ENCODE measurements at regions of chr19 and their contacts with region 1.

Region 1: DNA sequence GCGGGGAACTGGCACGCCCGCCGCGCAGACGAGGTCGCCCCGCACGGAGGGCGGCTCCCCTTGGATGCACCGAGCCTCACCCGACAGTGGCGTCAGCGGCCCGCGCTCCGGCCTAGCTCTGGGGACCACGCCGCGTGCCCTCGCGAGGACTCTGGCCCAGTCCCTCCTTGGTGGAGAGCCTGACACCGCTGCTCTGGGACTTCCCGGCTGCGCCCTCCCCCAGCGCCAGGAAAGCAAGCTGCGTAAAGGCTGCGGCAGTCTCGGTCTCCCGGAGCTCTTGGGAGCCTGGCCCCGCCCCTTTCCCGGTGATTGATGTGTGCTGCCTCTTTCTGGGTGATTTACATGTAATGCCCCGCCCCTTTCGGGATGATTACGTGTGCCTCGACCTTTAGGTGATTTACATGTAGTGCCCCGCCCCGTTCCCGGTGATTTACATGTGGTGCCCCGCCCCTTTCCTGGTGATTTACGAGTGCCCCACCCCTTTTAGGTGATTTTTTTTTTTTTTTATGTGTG is at the start of gene LENG9:
- DNase-seq: peak; percentile 98
- ATAC-seq: peak; percentile 79 to 84 (median 81)
- H3K4me3 ChIP-seq: peak within 1 kb of the TSS; percentile 78
- H3K27ac ChIP-seq: peak within 1 kb of the TSS; percentile 91
- H3K4me1 ChIP-seq: peaks cover 9% of the 10 kb centered on the region
- H3K27me3 ChIP-seq: peaks cover 0 to 2% (median 0%) of the 10 kb centered on the region in 3 donors
- CTCF ChIP-seq: no peak
- total RNA-seq, gene LENG9: 2.0 to 3.7 (median 2.7) TPM

Region 2: GRCh38 chr19:53982611-53983010 is 481.0 kb before region 1 on chr19:
- intact Hi-C with region 1: loop called in 1 of 2 experiments (anchors 10 kb)
- DNase-seq: peak; percentile 53 to 85
- ATAC-seq: peak in 3 of 4 donors; percentile 25 to 47 (median 35)
- H3K4me3 ChIP-seq: peak overlapping the region; percentile 48
- H3K27ac ChIP-seq: no peak overlapping the region
- H3K4me1 ChIP-seq: peaks cover 8% of the 10 kb centered on the region
- H3K27me3 ChIP-seq: peaks cover 0 to 12% (median 5%) of the 10 kb centered on the region in 3 donors
- CTCF ChIP-seq: no peak

Region 3: GRCh38 chr19:54376610-54377285 is 86.8 kb before region 1 on chr19:
- intact Hi-C with region 1: no loop called
- DNase-seq: no peak
- ATAC-seq: no peak
- H3K4me3 ChIP-seq: no peak overlapping the region
- H3K27ac ChIP-seq: no peak overlapping the region
- H3K4me1 ChIP-seq: no peaks in the 10 kb centered on the region
- H3K27me3 ChIP-seq: no peaks in the 10 kb centered on the region
- CTCF ChIP-seq: no peak

Region 4: GRCh38 chr19:54391589-54392061 is 72.0 kb before region 1 on chr19:
- intact Hi-C with region 1: no loop called
- DNase-seq: no peak
- ATAC-seq: no peak
- H3K4me3 ChIP-seq: no peak overlapping the region
- H3K27ac ChIP-seq: no peak overlapping the region
- H3K4me1 ChIP-seq: no peaks in the 10 kb centered on the region
- H3K27me3 ChIP-seq: peaks cover 0 to 21% (median 5%) of the 10 kb centered on the region in 3 donors
- CTCF ChIP-seq: no peak

Region 5: DNA sequence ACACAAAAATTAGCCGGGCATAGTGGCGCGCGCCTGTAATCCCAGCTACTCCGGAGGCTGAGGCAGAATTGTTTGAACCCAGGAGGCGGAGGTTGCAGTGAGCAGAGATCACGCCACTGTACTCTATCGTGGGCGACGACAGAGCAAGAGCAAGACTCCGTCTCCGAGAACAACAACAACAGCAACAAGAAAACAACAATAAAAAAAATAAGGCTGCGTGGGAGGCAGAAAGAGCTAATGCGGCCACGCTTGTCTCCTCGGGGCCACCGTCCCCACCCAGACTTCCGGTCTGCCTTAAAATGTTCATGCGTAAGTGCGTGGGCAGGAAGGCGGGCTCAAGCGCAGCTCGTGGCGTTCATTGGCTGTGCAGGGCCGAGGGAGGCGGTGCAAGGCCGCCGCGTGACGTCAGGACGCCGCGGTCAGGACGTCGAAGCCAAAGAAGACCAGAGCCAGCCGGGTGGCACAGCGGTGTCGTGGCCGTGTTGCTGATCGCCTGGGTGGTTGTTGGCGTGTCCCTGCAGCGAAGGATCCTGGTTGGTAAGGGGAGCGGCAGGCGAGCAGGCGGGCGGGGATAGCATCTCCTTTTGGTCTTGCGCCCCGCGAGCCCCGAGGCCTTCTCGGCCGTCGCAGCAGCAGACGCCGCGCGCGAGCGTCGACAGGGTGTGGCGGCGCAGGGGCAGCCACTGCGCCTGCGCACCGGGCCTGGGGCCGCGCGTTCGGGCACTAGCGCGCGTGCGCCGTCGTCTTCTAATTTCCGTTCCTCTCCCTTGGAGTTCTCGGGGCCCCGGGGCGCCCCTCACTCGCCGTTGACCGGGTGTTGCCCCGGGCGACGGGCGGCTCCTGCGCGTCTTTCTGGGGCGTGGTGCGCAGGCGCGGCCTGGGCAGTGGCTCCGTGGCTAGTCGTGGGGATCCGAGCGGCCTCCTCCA is 14.6 kb before region 1 on chr19 and contains the start of gene LENG8:
- intact Hi-C with region 1: loop called in 1 of 2 experiments (anchors 1 kb)
- DNase-seq: peak; percentile 98 to 99
- ATAC-seq: peak; percentile 97 to 98 (median 98)
- H3K4me3 ChIP-seq: peak within 1 kb of the TSS; percentile 80
- H3K27ac ChIP-seq: peak within 1 kb of the TSS; percentile 94
- H3K4me1 ChIP-seq: peaks cover 25% of the 10 kb centered on the region
- H3K27me3 ChIP-seq: no peaks in the 10 kb centered on the region
- CTCF ChIP-seq: no peak
- total RNA-seq, gene LENG8: 28.2 to 60.2 (median 41.8) TPM